ENCODE measurements at regions of chr19 and their contacts with region 1.

Region 1: DNA sequence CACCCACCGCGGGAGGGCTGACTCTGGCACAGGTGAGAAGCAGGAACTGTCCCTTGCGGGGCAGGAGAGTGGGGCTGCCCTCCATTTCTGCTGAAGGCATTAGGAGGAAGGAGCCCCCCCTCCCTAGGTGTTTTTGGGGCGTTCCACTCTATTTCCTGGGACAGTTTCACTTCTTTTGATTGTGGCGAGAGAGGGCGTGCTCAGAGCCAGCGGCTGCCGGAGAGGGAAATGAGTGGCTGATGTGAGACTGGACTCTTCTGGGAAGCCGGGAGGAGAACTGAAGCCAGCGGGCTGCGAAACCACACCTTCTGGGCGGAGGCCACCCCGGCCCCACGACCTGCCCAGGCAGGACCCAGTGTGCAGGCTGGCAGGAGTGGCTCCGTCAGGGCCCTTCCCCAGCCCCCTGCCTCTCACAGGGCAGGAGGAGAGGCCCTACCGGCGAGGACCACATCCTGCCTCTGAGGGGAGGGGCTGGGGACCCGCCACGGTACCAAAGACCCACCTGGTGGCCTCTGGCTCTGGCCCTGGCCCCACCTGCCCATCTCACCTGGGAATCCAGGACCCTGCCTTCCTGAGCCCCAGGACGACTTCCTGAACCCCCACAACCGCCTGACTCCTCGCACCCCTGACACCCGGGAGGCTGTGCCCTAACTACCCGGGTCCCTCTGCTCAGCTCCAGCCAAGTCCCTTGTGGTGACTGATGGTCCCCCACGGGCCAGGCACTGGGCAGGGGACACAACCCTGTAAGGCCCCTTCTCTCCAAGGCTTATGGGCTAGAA is 25.9 kb downstream of the MPND start:
- DNase-seq: peak; percentile 32 to 62 (median 51)
- H3K4me3 ChIP-seq: peak overlapping the region in 6 of 7 experiments; percentile 38 to 74 (median 52)
- H3K27ac ChIP-seq: peak overlapping the region in 1 of 2 experiments; percentile 49
- H3K4me1 ChIP-seq: peaks cover 0 to 60% (median 37%) of the 10 kb centered on the region in 4 experiments
- H3K27me3 ChIP-seq: no peaks in the 10 kb centered on the region

Region 2: DNA sequence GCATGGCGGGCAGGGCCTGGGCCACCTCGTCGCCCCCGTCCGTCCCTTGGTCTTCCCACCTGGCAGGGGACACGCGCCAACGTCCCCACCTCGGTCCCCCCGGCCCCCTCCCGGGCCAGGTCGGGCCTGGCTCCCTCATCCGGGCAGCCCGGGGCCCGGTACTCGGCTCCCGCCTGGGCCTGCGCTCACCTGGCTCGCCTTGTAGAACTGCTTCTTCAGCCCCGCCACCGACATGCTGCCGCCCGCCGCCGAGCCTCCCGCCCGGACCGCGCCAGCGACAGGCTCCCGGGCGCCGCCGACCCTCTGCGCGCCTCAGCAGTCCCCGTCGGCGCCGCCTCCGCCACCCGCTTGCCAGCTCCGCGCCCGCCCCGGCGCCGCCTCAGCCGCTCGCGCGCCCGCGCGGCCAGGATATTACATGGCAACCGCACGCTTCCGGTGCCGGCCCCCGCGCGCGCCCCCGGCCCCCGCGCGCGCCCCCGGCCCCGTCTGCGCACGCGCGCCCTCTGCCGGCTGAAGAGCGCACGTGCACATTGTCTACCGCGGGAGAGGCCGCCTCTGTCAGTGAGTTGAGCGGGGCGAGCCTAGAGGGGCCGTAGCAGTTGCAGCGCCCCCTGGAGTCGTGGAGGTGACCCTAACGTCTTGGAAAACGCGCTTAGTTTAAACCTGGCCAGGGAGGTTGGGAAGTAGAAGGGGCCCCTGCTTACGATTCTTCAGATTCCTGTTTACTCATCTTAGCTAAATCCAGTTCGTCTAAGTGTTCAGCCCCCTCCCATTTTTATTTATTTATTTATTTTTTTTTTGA is 31.0 kb after region 1 on chr19 and contains the start of gene SH3GL1:
- CTCF ChIA-PET with region 1: interaction called, 23 read pairs
- POLR2A ChIA-PET with region 1: interaction called, 4 read pairs
- DNase-seq: peak; percentile 93 to 96 (median 95)
- H3K4me3 ChIP-seq: peak within 1 kb of the TSS; percentile 67 to 93 (median 85)
- H3K27ac ChIP-seq: peak within 1 kb of the TSS; percentile 86 to 96
- H3K4me1 ChIP-seq: peaks cover 8 to 47% (median 37%) of the 10 kb centered on the region in 4 experiments
- H3K27me3 ChIP-seq: no peaks in the 10 kb centered on the region

Region 3: DNA sequence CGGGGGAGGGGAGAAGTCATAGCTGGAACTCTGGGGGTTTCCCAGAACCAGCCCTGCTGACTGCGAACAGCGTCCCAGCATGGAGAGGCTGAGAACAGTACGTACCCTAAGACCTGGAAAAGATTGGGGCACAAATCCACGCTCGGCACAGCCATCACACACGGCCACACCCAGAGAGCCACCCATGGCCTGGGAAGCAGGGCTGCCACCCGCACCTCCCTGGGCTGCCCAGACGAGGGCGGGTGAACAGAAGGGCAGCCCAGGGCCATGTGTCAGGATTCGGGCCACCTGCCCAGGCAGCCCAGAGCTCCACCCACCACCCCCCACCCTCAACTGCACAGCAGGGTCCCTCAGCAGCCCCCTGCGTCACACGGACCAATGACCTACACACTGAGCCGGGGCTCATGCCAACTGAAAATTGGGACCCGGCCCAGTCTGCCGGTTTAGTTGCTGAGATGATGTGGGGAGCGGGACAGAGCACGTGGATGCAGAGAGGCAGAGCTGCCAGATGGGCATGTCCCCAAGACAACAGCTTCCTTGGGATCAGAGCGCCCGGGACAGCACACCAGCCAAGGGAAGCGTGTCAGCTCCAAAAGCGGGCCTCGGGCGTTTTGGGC is 79.8 kb after region 1 on chr19:
- CTCF ChIA-PET with region 1: no interaction called
- POLR2A ChIA-PET with region 1: no interaction called
- DNase-seq: no peak
- H3K4me3 ChIP-seq: no peak overlapping the region
- H3K27ac ChIP-seq: no peak overlapping the region
- H3K4me1 ChIP-seq: no peaks in the 10 kb centered on the region
- H3K27me3 ChIP-seq: no peaks in the 10 kb centered on the region

Region 4: GRCh38 chr19:4482721-4483364 is 113.5 kb after region 1 on chr19:
- CTCF ChIA-PET with region 1: no interaction called
- POLR2A ChIA-PET with region 1: no interaction called
- DNase-seq: no peak
- H3K4me3 ChIP-seq: no peak overlapping the region
- H3K27ac ChIP-seq: no peak overlapping the region
- H3K4me1 ChIP-seq: no peaks in the 10 kb centered on the region
- H3K27me3 ChIP-seq: no peaks in the 10 kb centered on the region

Measured in common myeloid progenitor, CD34-positive (primary cell).